GM13977 (cell line): ENCODE measurements at regions of chr1 and their contacts with region 1.

Region 1: DNA sequence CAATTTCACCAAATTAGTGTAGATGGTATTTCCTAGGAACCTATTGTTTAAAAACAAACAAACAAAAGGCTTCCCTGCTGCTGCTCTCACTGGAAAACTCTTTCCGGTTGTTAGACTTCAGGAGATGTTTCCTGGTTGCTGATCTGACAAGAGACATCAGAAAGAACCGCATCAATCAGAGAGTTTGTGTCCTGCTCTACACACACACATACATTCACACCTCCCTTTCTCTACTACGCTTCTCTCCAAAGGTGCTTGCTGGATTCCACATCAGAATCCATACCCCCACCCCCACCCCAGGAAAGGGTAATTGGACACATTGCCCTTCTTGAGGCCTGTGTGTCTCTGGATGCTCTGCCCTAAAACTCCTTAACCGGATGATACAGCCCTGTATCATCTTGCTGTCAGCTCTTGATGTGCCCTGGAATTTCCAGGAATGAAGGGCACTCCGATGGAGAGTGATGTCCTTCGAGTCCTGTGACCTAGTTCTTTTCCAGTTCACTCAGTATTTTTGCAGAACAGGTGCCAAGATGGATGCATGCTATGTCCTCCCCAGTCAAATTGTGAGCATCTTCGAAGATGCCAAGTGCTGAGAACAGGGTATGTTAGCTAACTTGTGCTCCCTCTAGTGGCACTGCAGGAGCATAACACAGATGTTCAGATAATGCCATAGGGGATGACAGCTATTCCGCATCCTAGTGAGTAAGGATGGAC is 113.7 kb upstream of the SLC35F3 start:
- DNase-seq: peak; percentile 62
- CTCF ChIP-seq: peak; percentile 91

Region 2: GRCh38 chr1:233435622-233436021 is 355.2 kb before region 1 on chr1:
- in situ Hi-C with region 1: loop called (anchors 10 kb)
- DNase-seq: no peak
- CTCF ChIP-seq: no peak

Region 3: GRCh38 chr1:234111458-234112142 is 320.8 kb after region 1 on chr1:
- in situ Hi-C with region 1: no loop called
- DNase-seq: no peak
- CTCF ChIP-seq: peak; percentile 23